Transverse colon (tissue), 4 donors: ENCODE measurements at regions of chr4 and their contacts with region 1.

Region 1: DNA sequence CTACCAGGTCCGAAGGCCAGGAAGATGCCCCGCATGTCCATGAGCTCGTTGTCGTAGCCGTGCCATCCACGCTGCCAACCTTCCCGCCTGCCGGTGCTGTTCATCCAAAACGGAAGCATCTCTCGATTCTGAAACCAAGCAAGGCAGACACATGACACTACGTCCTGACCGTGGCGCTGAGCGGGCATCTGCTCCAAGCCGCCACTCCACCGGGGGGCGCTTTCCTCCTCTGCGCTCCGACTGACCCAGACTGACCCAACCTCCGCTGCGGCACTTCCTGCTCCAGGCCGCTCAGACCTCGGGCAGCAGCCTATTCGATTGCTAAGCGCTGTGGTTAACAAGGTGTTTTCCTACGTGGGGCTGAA is 120.5 kb downstream of the ENPP6 start:
- DNase-seq: peak; percentile 57
- H3K4me3 ChIP-seq: peak overlapping the region in 2 of 4 donors; percentile 5 to 31
- H3K27ac ChIP-seq: no peak overlapping the region
- H3K4me1 ChIP-seq: peaks cover 0 to 5% (median 0%) of the 10 kb centered on the region in 4 donors
- H3K27me3 ChIP-seq: no peaks in the 10 kb centered on the region
- CTCF ChIP-seq: peak in 4 of 5 experiments; percentile 9 to 22 (median 15)
- EP300 ChIP-seq: no peak
- POLR2A ChIP-seq: no peak

Region 2: GRCh38 chr4:182969651-182970269 is 1127.5 kb before region 1 on chr4:
- in situ Hi-C with region 1: no loop called
- intact Hi-C with region 1: no loop called
- DNase-seq: no peak
- H3K4me3 ChIP-seq: no peak overlapping the region
- H3K27ac ChIP-seq: no peak overlapping the region
- H3K4me1 ChIP-seq: no peaks in the 10 kb centered on the region
- H3K27me3 ChIP-seq: no peaks in the 10 kb centered on the region
- CTCF ChIP-seq: no peak
- EP300 ChIP-seq: no peak
- POLR2A ChIP-seq: no peak

Region 3: DNA sequence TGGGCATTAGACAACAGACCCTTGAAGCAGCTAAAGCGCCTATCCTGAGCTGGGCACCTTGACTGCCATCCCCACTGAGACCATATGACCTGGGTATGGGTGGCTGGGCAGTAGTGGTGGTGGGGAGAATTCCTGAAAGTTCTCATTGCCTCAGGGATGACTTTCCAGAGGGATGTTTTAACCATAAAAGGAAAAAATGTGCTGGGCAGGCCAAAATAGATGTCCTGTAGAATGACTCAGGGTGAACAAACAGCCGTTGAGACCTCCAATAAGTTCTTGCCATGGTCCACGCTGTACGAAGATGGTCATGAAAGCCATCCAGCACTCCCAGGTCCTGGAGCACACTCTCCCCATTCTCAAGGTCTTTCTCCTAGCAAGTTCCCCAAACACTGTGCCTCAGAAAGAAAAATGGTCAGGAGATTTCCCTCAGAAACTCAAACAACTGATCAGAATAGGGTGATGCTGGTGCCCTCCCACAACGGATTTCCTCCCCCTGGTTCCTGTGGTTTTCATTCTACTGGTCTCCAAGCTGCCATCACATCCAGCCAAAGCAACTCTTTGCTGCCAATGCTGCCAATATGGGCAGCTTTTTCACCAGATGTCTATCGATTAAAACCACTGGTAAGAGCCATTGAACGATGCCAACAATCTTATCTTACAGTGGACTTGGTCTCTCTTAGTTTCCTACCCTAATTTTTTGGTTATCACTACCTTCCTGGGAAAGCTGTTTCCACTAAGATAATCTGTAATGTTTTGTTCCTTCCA is 641.6 kb before region 1 on chr4:
- in situ Hi-C with region 1: no loop called
- intact Hi-C with region 1: loop called (anchors 10 kb)
- DNase-seq: no peak
- H3K4me3 ChIP-seq: no peak overlapping the region
- H3K27ac ChIP-seq: no peak overlapping the region
- H3K4me1 ChIP-seq: no peaks in the 10 kb centered on the region
- H3K27me3 ChIP-seq: no peaks in the 10 kb centered on the region
- CTCF ChIP-seq: no peak
- EP300 ChIP-seq: no peak
- POLR2A ChIP-seq: no peak